CD8-positive, alpha-beta T cell (primary cell): ENCODE measurements at regions of chr9 and their contacts with region 1.

Region 1: DNA sequence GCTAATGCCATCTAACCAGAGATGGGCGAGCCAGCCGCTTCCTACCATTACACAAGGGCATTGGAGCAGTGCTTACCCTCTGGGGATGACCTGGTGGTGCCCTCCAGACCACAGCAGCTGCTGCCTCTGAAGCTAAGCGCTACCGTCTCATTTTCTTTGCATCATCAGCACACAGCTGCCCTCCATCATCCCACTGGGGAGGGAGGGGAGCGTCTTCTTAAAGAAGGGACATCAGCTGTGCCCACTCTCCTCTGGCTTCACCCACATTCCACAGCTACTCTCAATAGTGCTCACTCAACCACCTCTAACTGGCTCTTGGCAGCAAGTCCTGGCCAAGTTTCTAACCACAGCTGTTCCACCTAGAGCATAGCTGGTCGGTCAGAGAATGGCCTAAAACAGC is 503.4 kb downstream of the NFIB start:
- DNase-seq: no peak
- ATAC-seq: no peak
- H3K4me3 ChIP-seq: no peak overlapping the region
- H3K4me3 Mint-ChIP-seq: no peak overlapping the region
- H3K27ac ChIP-seq: no peak overlapping the region
- H3K27ac Mint-ChIP-seq: no peak overlapping the region
- H3K4me1 ChIP-seq: no peaks in the 10 kb centered on the region
- H3K4me1 Mint-ChIP-seq: no peaks in the 10 kb centered on the region
- H3K27me3 ChIP-seq: no peaks in the 10 kb centered on the region
- H3K27me3 Mint-ChIP-seq: no peaks in the 10 kb centered on the region
- CTCF ChIP-seq: no peak

Region 2: DNA sequence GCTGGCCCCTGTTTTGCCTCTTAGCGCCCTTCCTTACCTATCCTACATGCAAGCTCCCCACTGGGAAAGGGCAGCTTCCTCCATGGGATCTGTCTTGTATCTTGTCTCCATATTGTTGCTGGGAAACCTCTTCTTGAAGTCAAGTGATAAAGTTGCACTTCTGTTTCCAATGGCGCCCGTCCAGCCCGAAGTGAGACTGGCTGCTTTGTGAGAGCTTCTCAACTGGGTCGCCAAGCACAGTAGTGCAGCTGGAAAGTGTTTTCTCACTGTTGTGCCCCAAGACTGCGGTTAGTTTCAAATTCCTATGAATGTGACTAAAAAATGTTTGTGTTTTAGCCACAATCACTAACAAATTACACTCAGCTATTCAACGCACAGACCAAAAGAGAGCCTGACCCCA is 24.4 kb before region 1 on chr9:
- CTCF ChIA-PET with region 1: no interaction called
- POLR2A ChIA-PET with region 1: no interaction called
- intact Hi-C with region 1: loop called in 1 of 2 experiments (anchors 2 kb)
- DNase-seq: no peak
- ATAC-seq: no peak
- H3K4me3 ChIP-seq: no peak overlapping the region
- H3K4me3 Mint-ChIP-seq: no peak overlapping the region
- H3K27ac ChIP-seq: no peak overlapping the region
- H3K27ac Mint-ChIP-seq: no peak overlapping the region
- H3K4me1 ChIP-seq: no peaks in the 10 kb centered on the region
- H3K4me1 Mint-ChIP-seq: no peaks in the 10 kb centered on the region
- H3K27me3 ChIP-seq: no peaks in the 10 kb centered on the region
- H3K27me3 Mint-ChIP-seq: no peaks in the 10 kb centered on the region
- CTCF ChIP-seq: no peak